Transverse colon (tissue), 4 donors: ENCODE measurements at regions of chr20 and their contacts with region 1.

Region 1: GRCh38 chr20:39049684-39050554 is 87.8 kb downstream of the DHX35 start:
- DNase-seq: peak; percentile 84
- H3K4me3 ChIP-seq: peak overlapping the region; percentile 49 to 70 (median 59)
- H3K27ac ChIP-seq: peak overlapping the region; percentile 71 to 78 (median 74)
- H3K4me1 ChIP-seq: peaks cover 3 to 13% (median 7%) of the 10 kb centered on the region in 4 donors
- H3K27me3 ChIP-seq: no peaks in the 10 kb centered on the region
- CTCF ChIP-seq: peak; percentile 92 to 99 (median 99)
- EP300 ChIP-seq: no peak
- POLR2A ChIP-seq: no peak

Region 2: GRCh38 chr20:38907918-38908677 is 141.8 kb before region 1 on chr20:
- in situ Hi-C with region 1: loop called in 1 of 4 experiments (anchors 25 kb)
- intact Hi-C with region 1: no loop called
- DNase-seq: no peak
- H3K4me3 ChIP-seq: no peak overlapping the region
- H3K27ac ChIP-seq: no peak overlapping the region
- H3K4me1 ChIP-seq: no peaks in the 10 kb centered on the region
- H3K27me3 ChIP-seq: no peaks in the 10 kb centered on the region
- CTCF ChIP-seq: no peak
- EP300 ChIP-seq: no peak
- POLR2A ChIP-seq: no peak

Region 3: DNA sequence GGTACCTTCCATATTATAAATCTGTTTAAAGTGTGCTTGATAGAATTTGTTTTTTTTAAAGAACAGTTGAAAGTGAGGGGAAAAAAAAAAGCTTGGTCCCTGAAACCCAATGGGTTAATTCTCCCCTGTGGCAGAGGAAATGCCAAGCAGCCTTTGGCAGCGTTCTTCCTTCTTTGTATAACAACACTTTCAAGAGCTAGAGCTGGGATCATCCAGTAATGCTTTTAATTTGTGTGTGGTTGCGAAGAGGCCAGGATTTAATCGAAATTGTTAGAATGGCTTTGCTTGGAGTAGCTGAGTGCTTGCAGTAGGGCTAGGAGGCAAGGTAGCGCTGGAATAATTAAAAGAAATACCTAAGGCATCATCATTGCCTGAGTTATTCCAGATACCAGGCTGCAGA is 604.3 kb after region 1 on chr20:
- in situ Hi-C with region 1: no loop called
- intact Hi-C with region 1: no loop called
- DNase-seq: no peak
- H3K4me3 ChIP-seq: no peak overlapping the region
- H3K27ac ChIP-seq: no peak overlapping the region
- H3K4me1 ChIP-seq: peaks cover 0 to 6% (median 0%) of the 10 kb centered on the region in 4 donors
- H3K27me3 ChIP-seq: no peaks in the 10 kb centered on the region
- CTCF ChIP-seq: no peak
- EP300 ChIP-seq: no peak
- POLR2A ChIP-seq: no peak